ENCODE measurements at regions of chr2 and their contacts with region 1.

Region 1: GRCh38 chr2:108448678-108449493 is at the start of gene GCC2:
- DNase-seq: peak; percentile 95
- H3K4me3 ChIP-seq: peak within 1 kb of the TSS; percentile 83 to 93 (median 90)
- H3K27ac ChIP-seq: peak within 1 kb of the TSS; percentile 86
- H3K4me1 ChIP-seq: peaks cover 15% of the 10 kb centered on the region
- H3K27me3 ChIP-seq: no peaks in the 10 kb centered on the region
- CTCF ChIP-seq: no peak
- POLR2A ChIP-seq: peak; percentile 83
- total RNA-seq, gene GCC2: 33.7 and 38.7 TPM in 2 replicates

Region 2: DNA sequence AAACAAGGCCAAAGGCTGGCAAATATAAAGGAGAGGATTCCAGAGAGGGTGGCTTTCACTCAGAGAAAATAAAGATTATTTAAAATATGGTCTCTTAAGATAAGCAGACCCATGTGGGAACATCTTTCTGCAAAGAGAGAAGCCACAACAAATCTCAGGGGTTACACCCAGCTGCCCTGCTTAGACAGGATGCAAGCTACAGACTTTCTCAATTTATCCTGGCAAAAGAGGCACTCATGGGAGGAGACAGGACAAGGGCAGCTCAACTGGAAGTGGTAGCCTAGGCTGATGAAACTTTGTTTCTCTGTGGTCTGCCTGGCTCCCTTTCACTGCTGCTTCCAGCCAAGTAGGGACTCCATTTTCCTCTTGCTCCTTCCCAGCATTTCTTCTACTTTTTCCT is 97.0 kb before region 1 on chr2:
- CTCF ChIA-PET with region 1: no interaction called
- POLR2A ChIA-PET with region 1: no interaction called
- dilution Hi-C with region 1: no loop called
- intact Hi-C with region 1: loop called (anchors 2 kb)
- DNase-seq: no peak
- H3K4me3 ChIP-seq: no peak overlapping the region
- H3K27ac ChIP-seq: no peak overlapping the region
- H3K4me1 ChIP-seq: no peaks in the 10 kb centered on the region
- H3K27me3 ChIP-seq: peaks cover 15 to 23% of the 10 kb centered on the region in 2 experiments
- CTCF ChIP-seq: no peak
- POLR2A ChIP-seq: no peak

Region 3: DNA sequence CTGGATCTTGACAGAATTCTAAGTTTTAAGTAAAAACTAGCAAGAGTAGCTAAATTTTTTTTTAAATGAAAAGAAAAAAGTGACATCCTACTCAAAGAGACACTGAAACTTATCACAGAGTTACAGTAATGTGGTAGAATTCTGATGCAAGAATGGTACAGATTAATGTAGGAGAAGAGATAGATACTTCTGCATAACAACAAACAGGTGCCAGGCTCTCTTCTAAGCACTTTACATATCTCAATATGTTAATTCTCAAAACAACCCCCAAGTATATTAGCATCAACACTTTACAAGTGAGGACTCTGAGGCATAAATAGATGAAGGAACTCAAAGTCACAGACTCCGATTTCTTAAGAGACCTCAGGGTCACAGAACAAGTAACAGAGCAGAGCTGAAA is 28.2 kb after region 1 on chr2:
- CTCF ChIA-PET with region 1: no interaction called
- POLR2A ChIA-PET with region 1: interaction called, 14 read pairs
- dilution Hi-C with region 1: no loop called
- intact Hi-C with region 1: no loop called
- DNase-seq: no peak
- H3K4me3 ChIP-seq: no peak overlapping the region
- H3K27ac ChIP-seq: no peak overlapping the region
- H3K4me1 ChIP-seq: no peaks in the 10 kb centered on the region
- H3K27me3 ChIP-seq: no peaks in the 10 kb centered on the region
- CTCF ChIP-seq: no peak
- POLR2A ChIP-seq: no peak

Region 4: DNA sequence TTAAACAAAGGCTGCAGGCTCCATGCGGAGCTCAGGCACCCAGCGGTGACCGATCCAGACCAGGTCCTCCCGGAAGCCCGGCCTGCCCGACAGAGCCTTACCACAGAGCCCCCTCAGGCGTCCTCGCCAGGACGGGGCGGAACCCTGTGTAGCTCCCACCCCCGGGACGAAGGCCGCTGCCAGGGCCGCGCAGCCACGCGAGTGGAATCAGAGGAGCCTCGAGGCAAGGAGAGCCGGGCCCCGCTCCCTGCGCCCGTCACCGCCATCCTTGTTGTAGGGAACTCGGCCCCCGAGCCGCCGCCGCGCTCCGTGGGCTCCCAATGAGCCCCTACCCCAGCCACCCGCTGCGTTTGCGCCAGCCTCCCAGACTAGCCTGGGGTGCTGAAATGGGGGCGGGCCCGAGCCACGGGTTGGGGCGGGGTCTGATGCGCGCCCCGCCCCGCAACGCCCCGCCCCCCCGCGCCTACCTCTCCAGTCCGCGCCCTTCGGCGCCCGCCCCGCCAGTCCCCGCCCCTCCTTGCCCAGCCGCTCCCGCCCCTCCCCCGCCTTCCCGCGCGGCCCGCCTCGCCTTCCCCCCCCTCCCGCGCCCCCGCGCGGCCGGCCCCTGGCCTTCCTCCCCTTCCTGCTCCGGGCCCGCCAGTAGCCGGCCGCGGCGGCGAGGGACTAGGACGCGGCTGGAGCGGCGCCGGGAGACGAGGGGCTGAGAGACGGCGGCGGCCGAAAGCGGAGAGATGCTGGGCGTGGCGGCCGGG is 85.1 kb after region 1 on chr2 and contains the start of gene LIMS1:
- CTCF ChIA-PET with region 1: no interaction called
- POLR2A ChIA-PET with region 1: interaction called, 8 read pairs
- dilution Hi-C with region 1: no loop called
- intact Hi-C with region 1: loop called (anchors 2 kb)
- DNase-seq: peak; percentile 90
- H3K4me3 ChIP-seq: peak within 1 kb of the TSS; percentile 65 to 84 (median 74)
- H3K27ac ChIP-seq: peak within 1 kb of the TSS; percentile 86
- H3K4me1 ChIP-seq: peaks cover 15% of the 10 kb centered on the region
- H3K27me3 ChIP-seq: no peaks in the 10 kb centered on the region
- CTCF ChIP-seq: no peak
- POLR2A ChIP-seq: peak; percentile 83
- total RNA-seq, gene LIMS1: 153 and 166 TPM in 2 replicates